HepG2 (cell line): ENCODE measurements at regions of chr14 and their contacts with region 1.

Region 1: GRCh38 chr14:74712499-74713394 is at the starts of genes AREL1 and FCF1:
- DNase-seq: peak; percentile 90
- ATAC-seq: peak; percentile 99
- H3K4me3 ChIP-seq: peak within 1 kb of the TSS; percentile 84 to 92 (median 86)
- H3K27ac ChIP-seq: peak within 1 kb of the TSS; percentile 65
- H3K4me1 ChIP-seq: peaks cover 38% of the 10 kb centered on the region
- H3K27me3 ChIP-seq: no peaks in the 10 kb centered on the region; a peak in 1 of 5 replicates
- CTCF ChIP-seq: no peak
- EP300 ChIP-seq: no peak
- POLR2A ChIP-seq: peak; percentile 81 to 84
- RAD21 ChIP-seq: no peak
- total RNA-seq, gene AREL1: 18.4 and 21.3 TPM in 2 replicates
- total RNA-seq, gene FCF1: 44.4 and 70.8 TPM in 2 replicates

Region 2: GRCh38 chr14:74762917-74763802 is 50.4 kb after region 1 on chr14 and contains the start of gene YLPM1:
- CTCF ChIA-PET with region 1: no interaction called
- POLR2A ChIA-PET with region 1: no interaction called
- in situ Hi-C with region 1: no loop called
- intact Hi-C with region 1: loop called (anchors 2 kb)
- DNase-seq: peak; percentile 94
- ATAC-seq: peak; percentile 98
- H3K4me3 ChIP-seq: peak within 1 kb of the TSS; percentile 92 to 96 (median 95)
- H3K27ac ChIP-seq: peak within 1 kb of the TSS; percentile 84
- H3K4me1 ChIP-seq: peaks cover 43% of the 10 kb centered on the region
- H3K27me3 ChIP-seq: no peaks in the 10 kb centered on the region; a peak in 1 of 5 replicates
- CTCF ChIP-seq: peak; percentile 85
- EP300 ChIP-seq: no peak
- POLR2A ChIP-seq: peak; percentile 79 to 92
- RAD21 ChIP-seq: peak; percentile 38; the same call in 1 of the 2 replicates
- total RNA-seq, gene YLPM1: 21.9 and 37.6 TPM in 2 replicates

Region 3: DNA sequence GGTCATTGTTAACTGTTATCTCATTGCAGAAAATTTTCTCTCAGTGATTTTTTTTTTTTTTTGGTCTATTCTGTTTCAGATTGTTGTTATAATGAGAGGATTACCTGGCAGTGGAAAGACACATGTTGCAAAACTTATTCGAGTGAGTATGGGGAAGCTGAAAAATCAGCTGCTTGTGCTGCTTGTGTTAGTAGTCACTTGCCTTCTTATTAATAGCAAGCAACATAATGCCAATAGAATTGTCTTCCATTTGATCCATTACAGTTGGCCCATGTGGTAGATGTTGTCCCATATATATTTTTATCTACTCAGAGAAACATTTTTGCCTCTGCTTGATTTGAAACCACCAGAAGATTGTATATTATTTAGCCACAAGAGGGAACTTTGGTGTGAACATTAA is 103.4 kb after region 1 on chr14:
- CTCF ChIA-PET with region 1: no interaction called
- POLR2A ChIA-PET with region 1: no interaction called
- in situ Hi-C with region 1: no loop called
- intact Hi-C with region 1: no loop called
- DNase-seq: no peak
- ATAC-seq: no peak
- H3K4me3 ChIP-seq: no peak overlapping the region
- H3K27ac ChIP-seq: no peak overlapping the region
- H3K4me1 ChIP-seq: peaks cover 12% of the 10 kb centered on the region
- H3K27me3 ChIP-seq: no peaks in the 10 kb centered on the region
- CTCF ChIP-seq: no peak
- EP300 ChIP-seq: no peak
- POLR2A ChIP-seq: no peak
- RAD21 ChIP-seq: no peak